GM13977 (cell line): ENCODE measurements at regions of chr1 and their contacts with region 1.

Region 1: GRCh38 chr1:48916130-48917069 is 139.7 kb upstream of the BEND5 start:
- DNase-seq: no peak
- CTCF ChIP-seq: peak; percentile 31

Region 2: DNA sequence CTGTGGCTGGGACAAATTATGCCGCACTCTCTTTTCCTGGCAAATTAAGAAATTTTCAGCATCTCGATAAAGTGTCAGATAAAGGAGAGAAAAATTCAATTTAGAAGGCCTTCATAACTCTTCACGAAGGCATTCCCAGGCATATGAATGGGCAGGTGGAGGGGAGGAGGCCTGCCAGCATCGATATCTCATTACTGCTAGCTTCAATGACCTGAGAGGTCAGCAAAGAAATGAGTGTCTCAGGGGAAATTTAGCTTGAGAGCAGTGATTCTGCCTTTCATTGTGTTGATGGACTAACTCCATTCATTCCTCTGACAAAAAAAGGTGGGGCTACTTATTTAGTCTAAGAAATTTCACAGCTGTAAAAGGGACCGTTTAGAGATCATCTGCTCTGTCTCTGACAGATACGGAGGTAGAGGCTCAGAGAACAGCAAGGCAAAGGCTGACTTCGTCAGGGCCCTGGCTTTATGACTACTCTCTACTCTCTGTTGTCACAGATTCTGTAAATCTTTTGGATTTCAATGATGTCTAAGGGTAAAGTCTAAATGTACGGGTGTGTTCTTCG is 72.3 kb after region 1 on chr1:
- in situ Hi-C with region 1: no loop called
- DNase-seq: no peak
- CTCF ChIP-seq: no peak

Region 3: DNA sequence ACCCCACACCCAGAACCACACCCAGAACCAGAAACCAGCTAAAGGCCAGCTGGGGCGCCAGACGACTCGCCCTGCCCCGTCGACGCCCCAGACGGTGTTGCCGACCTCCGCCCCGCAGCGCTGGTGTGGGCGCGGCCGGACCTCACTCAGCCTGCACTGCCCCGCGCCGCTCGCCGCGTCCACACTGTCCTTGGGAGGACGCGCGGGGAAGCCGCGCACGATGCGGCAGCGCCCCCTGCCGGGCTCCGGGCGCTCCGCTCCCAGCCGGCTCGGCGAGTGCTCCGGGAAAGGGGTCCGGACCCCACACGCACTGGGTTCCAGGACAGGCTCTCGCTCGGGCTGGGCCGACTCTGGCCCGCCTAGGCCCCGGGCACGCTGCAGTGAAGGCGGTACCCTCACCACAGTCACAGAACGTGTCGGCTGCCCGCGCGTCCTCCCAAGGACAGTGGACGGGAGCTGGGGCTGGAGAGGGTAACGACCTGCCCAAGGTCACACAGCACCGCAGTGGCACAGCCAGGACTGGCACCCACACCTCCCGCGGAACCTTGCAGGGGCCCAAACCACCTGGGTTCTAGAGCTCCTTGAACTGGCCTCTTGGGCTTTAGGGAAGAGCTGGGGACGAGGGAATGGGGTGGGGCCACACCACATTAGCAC is 1416.7 kb after region 1 on chr1:
- in situ Hi-C with region 1: loop called (anchors 25 kb)
- DNase-seq: peak; percentile 87
- CTCF ChIP-seq: peak; percentile 94